HEK293T (cell line): ENCODE measurements at regions of chr2 and their contacts with region 1.

Region 1: DNA sequence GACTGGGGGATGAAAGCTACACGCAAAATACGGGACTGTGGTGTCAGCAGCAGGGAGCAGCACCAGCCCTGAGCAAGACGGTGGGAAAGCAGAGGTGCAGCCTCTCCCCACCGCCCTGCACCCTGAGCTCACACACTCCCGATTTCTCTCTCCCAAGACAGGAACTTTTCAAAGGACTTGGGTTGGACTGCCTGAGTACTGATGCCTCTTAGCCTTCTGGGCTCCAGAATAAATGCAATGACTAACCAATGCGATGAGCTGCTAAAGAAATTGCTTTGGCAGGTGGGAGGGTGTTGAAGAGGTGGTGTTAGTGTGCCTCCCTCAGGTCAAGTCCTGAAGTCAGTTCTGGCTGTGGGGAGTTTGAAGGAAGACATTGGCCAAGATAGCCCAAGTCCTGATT is 9.6 kb downstream of the TRIM54 start:
- DNase-seq: peak; percentile 26

Region 2: DNA sequence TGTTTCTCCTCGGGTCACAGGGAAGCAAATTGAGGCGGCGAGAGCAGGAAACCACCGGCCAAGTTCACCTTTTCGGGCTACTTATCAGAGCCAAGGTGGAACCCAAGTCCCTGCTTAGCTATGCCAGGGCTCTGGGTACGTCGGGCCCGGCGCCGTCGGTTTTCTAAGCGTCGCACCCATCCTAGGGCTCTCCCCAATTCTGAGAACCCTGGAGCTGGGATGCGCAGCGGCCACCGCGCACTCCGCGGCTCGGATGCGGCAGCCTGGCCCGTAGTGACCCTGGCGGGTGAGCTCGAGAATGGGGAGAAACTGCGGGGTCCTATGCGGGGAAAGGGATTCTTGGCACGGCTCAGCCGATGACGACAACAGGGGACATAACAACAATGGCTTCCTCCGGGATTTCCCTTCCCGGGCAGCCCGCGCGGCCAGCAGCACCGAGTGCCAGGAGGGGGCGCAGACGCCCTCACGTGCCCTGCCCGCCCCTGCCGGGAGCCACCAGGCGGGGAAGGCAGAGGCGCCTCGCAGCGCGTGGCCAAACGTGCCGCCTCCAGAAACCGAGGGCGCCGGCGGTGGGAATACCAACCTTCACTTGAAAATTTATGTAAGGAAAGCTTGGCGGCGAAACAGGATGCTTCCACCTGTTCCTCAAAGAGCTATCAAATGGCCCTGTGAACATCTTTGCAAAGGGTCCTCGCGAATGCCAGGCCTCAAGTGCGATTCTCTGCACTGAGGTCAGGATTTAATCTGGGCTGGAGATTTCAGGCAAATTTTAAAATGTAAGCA is 26.9 kb before region 1 on chr2:
- CTCF ChIA-PET with region 1: interaction called, 10 read pairs
- POLR2A ChIA-PET with region 1: interaction called, 3 read pairs
- DNase-seq: peak; percentile 87

Region 3: GRCh38 chr2:27303093-27304025 is 11.5 kb after region 1 on chr2:
- CTCF ChIA-PET with region 1: interaction called, 28 read pairs
- POLR2A ChIA-PET with region 1: interaction called, 11 read pairs
- DNase-seq: peak; percentile 67

Region 4: GRCh38 chr2:27322766-27323595 is 31.1 kb after region 1 on chr2 and contains the start of gene MPV17:
- CTCF ChIA-PET with region 1: no interaction called
- POLR2A ChIA-PET with region 1: interaction called, 17 read pairs
- DNase-seq: peak; percentile 95